AG04449 (cell line): ENCODE measurements at regions of chr2 and their contacts with region 1.

Region 1: GRCh38 chr2:54149638-54150441 is 34.4 kb downstream of the ACYP2 start:
- DNase-seq: peak; percentile 46
- H3K4me3 ChIP-seq: no peak overlapping the region
- CTCF ChIP-seq: no peak

Region 2: DNA sequence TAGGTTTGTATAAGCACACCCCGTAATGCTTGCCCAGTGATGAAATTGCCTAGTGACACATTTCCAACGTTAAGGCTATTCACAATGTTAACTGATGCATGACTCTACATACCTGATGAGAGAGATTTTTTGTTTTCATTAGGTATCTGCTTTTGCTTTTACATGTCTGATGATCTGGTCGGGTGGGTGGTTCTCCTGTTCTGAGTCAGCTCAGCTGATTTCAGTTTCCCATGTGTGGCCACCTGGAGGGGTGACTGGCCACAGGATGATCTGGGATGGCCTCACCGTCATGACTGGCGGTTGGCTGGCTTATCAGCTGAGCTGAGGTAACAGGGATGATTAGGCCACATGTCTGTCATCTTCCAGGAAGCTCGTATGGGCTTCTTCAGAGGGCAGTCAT is 68.3 kb before region 1 on chr2:
- CTCF ChIA-PET with region 1: no interaction called
- POLR2A ChIA-PET with region 1: no interaction called
- DNase-seq: no peak
- H3K4me3 ChIP-seq: no peak overlapping the region
- CTCF ChIP-seq: no peak

Region 3: DNA sequence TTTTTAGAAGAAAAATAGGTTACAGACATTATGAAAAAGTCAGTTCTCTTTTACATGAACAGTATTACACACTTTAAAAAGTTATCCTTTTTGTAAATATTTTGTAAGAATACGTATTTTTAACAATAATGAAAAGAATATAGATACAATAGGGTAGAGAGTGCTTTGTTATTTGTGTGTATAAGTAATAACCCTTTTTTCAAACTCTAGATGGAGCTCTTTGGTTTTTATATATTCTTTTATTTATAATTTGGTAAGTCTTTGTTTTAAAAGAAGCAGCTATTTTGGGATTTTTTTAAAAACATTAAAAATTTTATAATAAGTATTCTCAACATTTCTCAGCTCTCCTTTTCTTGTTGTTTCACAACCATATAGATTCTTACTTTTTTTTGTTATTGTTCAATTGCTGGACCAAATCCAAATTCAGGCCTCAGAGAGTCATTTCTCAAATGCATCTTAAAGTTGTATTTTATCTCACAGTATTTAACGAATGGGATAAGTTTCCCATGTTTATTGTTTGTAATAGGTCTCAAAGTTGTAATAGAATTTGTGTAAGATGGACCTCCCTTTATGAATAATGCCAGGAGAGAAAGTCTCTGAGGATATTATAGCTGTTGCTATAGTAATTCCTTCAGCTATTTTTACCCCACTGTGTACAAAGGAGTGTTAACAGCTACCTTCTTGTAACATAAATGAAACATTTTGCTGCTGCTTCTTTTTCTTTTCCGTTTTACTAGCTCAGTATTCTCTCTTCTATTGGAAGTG is 12.0 kb after region 1 on chr2:
- CTCF ChIA-PET with region 1: interaction called, 33 read pairs
- POLR2A ChIA-PET with region 1: no interaction called
- DNase-seq: no peak
- H3K4me3 ChIP-seq: no peak overlapping the region
- CTCF ChIP-seq: no peak

Region 4: DNA sequence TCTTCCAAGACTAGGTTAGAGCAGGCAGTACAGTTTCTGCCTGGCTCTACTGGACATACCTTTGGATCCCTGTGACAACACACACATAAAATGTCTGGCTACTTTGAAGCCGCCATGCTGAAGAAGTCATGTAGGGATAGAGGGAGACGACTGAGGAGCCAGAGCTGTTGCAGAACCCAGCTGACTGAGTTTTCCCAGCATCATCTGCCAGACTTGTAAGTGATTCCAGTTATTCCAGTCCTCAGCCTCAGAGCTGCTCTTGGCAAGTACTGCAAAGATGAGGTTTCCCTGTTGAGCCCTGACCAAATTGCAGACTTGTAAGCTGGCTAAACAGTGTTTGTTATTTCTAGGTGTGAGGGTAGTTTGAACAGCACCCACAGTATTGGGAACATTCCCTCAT is 137.7 kb after region 1 on chr2:
- CTCF ChIA-PET with region 1: no interaction called
- POLR2A ChIA-PET with region 1: no interaction called
- DNase-seq: no peak
- H3K4me3 ChIP-seq: no peak overlapping the region
- CTCF ChIP-seq: no peak

Region 5: DNA sequence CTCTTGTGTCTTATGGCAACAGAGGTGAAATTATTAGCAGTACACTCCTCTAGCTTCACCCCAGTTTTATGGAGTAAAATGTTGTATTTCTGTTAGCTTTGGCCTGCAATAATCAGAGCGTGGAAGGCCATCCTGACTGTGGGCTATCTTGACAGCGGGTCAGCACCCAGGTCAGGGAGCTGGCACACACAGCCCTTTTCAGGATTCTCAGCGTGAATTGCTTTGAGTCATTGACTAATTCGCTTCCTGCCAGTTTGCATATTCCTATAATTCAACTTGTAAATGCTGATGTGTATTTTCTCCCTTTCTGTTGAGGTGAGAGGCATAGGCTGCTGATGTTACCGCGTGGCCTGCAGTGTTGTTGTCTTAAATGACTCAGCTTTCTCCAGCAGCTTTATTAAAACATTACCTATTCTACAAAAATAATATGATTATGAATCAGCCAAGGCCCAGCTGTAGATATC is 464.0 kb after region 1 on chr2:
- CTCF ChIA-PET with region 1: no interaction called
- POLR2A ChIA-PET with region 1: no interaction called
- DNase-seq: no peak
- H3K4me3 ChIP-seq: no peak overlapping the region
- CTCF ChIP-seq: no peak